ENCODE measurements at regions of chr12 and their contacts with region 1.

Region 1: GRCh38 chr12:45728630-45729232 is 775 bp upstream of the ARID2 start:
- DNase-seq: peak; percentile 97
- H3K4me3 ChIP-seq: peak overlapping the region; percentile 28 to 71 (median 60)
- H3K27ac ChIP-seq: peak overlapping the region; percentile 87
- H3K4me1 ChIP-seq: peaks cover 32% of the 10 kb centered on the region
- H3K27me3 ChIP-seq: no peaks in the 10 kb centered on the region
- CTCF ChIP-seq: peak; percentile 93 to 96
- POLR2A ChIP-seq: peak; percentile 84

Region 2: DNA sequence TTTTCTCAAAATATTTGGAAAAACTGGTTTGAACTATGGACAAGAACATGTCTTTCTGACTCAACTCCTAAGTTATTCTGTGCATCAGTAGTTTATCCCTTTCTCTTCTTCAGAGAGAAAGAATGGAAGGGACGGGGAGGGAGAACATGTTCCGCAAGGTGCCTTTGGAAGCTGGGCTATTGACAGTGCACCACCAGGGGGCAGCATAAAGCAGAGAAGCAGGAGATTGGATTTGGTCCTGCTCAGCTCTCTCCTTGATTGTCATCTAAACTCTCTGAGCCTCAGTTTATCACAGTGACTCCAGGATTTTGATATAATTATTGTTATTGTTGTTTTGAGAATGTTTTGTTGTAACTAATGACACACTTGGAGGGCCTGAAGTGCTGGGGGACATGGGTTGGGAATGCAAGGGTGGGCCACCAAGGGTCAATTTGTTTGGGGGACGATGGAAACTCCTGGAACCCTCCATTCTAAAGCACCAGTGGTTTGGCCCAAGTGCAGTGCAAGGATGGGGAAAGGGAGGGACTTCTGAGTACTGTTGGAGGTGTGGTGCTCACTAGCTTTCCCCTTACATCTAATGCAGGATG is 558.2 kb before region 1 on chr12:
- CTCF ChIA-PET with region 1: interaction called, 16 read pairs
- POLR2A ChIA-PET with region 1: no interaction called
- dilution Hi-C with region 1: no loop called
- intact Hi-C with region 1: loop called (anchors 2 kb)
- DNase-seq: peak; percentile 74
- H3K4me3 ChIP-seq: no peak overlapping the region
- H3K27ac ChIP-seq: no peak overlapping the region
- H3K4me1 ChIP-seq: no peaks in the 10 kb centered on the region
- H3K27me3 ChIP-seq: peaks cover 0 to 5% of the 10 kb centered on the region in 2 experiments
- CTCF ChIP-seq: peak; percentile 86 to 90
- POLR2A ChIP-seq: no peak

Region 3: DNA sequence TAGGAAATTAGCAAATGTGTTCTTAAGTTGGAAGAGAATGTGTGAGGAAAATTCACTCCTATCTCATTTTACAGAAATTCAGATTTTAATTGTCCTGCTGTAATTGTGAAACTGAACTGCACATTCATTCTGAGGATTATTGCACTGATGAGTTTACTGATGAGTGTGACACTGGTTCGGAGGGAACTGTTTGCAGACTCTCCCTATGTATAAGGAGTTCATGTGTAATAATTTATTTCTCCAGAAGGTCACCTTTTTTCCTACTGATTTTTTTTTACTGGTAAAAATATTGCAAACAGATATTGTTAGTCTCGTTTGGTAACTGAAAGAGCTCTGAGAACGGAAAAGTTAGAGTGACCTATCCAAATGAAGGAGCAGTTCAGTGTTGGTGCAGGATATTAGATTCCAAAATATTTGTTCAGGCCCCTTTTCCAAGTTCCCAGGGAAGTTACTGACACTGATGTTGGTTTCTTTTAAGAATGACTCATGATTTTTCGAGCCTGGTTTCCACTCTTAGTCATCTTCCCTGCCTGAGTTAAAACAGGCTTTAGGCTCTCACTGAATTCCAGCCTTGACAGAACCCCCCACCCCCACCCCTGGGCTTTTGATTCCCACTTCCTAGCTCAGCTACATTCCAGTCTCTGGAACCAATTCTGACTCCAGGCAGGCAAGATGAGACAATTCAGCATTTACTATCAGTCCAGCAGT is 494.4 kb before region 1 on chr12:
- CTCF ChIA-PET with region 1: no interaction called
- POLR2A ChIA-PET with region 1: no interaction called
- dilution Hi-C with region 1: no loop called
- intact Hi-C with region 1: loop called (anchors 2 kb)
- DNase-seq: peak; percentile 98
- H3K4me3 ChIP-seq: peak overlapping the region in 1 of 3 experiments; percentile 20
- H3K27ac ChIP-seq: peak overlapping the region; percentile 100
- H3K4me1 ChIP-seq: peaks cover 52% of the 10 kb centered on the region
- H3K27me3 ChIP-seq: no peaks in the 10 kb centered on the region
- CTCF ChIP-seq: no peak
- POLR2A ChIP-seq: peak; percentile 34

Region 4: GRCh38 chr12:45381351-45381750 is 347.4 kb before region 1 on chr12:
- CTCF ChIA-PET with region 1: no interaction called
- POLR2A ChIA-PET with region 1: no interaction called
- dilution Hi-C with region 1: no loop called
- intact Hi-C with region 1: no loop called
- DNase-seq: no peak
- H3K4me3 ChIP-seq: no peak overlapping the region
- H3K27ac ChIP-seq: no peak overlapping the region
- H3K4me1 ChIP-seq: peaks cover 30% of the 10 kb centered on the region
- H3K27me3 ChIP-seq: no peaks in the 10 kb centered on the region
- CTCF ChIP-seq: no peak
- POLR2A ChIP-seq: no peak

Region 5: DNA sequence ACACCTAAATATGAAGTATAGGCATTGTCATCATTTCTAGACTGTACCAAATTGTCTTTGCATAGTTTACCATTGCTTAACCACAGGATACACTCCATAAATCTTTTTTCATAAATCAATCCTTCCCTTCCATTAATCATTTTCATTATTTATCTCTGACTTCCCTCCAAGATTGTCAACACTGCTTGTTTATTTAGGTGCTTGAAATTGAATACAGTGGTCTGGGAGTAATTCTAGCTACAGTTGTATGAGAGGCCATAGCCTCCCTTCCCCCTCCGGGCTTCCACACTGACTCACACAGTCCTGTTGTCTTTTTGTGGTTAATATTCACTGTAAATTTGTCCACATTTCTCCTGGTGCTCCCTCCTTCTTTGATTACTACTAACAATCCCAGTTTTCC is 113.5 kb before region 1 on chr12:
- CTCF ChIA-PET with region 1: interaction called, 13 read pairs
- POLR2A ChIA-PET with region 1: no interaction called
- dilution Hi-C with region 1: no loop called
- intact Hi-C with region 1: loop called (anchors 1 kb)
- DNase-seq: peak; percentile 80
- H3K4me3 ChIP-seq: no peak overlapping the region
- H3K27ac ChIP-seq: no peak overlapping the region
- H3K4me1 ChIP-seq: peaks cover 31% of the 10 kb centered on the region
- H3K27me3 ChIP-seq: peaks cover 0 to 2% of the 10 kb centered on the region in 2 experiments
- CTCF ChIP-seq: no peak
- POLR2A ChIP-seq: peak; percentile 22

Region 6: DNA sequence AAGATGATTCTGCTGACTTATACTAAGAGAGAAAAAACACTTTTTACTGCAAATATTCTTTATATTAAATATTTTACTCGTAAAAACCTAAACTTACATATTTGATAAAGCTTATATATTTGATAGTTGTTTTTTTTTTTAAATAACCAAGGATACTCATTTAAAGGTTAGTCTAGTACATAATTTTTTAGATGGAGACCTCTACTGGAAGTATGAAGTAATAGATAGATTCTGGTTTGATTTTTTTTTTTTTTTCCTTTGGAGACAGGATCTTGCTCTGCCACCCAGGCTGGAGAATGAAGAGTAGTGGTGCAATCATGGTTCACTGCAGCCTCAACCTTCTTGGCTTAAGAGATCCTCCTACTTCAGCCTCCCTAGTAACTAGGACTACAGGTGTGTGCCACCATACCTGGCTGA is 17.1 kb after region 1 on chr12:
- CTCF ChIA-PET with region 1: interaction called, 23 read pairs
- POLR2A ChIA-PET with region 1: no interaction called
- dilution Hi-C with region 1: no loop called
- intact Hi-C with region 1: no loop called
- DNase-seq: peak; percentile 22
- H3K4me3 ChIP-seq: no peak overlapping the region
- H3K27ac ChIP-seq: no peak overlapping the region
- H3K4me1 ChIP-seq: no peaks in the 10 kb centered on the region
- H3K27me3 ChIP-seq: no peaks in the 10 kb centered on the region
- CTCF ChIP-seq: peak; percentile 5 to 16
- POLR2A ChIP-seq: no peak

Region 7: DNA sequence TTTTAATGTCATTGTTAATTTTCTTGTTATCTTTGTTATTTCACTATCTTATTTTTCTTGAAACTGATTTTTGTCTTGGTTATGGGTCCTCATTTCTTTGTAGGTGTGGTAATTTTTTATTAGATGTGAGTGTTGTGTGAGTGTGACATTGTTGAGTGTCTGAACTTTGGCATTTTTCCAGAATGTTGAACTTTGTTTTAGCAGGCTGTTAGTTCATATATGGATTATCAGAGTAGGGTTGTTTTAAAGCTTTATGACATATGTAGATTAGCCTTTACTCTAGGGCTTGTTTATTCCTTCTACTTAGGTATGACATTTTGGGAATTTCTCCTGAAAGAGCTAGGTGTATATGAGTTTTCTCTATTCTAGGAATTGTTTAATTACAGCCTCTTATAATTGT is 104.7 kb after region 1 on chr12:
- CTCF ChIA-PET with region 1: no interaction called
- POLR2A ChIA-PET with region 1: no interaction called
- dilution Hi-C with region 1: no loop called
- intact Hi-C with region 1: no loop called
- DNase-seq: no peak
- H3K4me3 ChIP-seq: no peak overlapping the region
- H3K27ac ChIP-seq: no peak overlapping the region
- H3K4me1 ChIP-seq: no peaks in the 10 kb centered on the region
- H3K27me3 ChIP-seq: no peaks in the 10 kb centered on the region
- CTCF ChIP-seq: no peak
- POLR2A ChIP-seq: no peak

Measured in endothelial cell of umbilical vein (primary cell).